ENCODE measurements at regions of chr7 and their contacts with region 1.

Region 1: GRCh38 chr7:37376386-37376785 is 72.3 kb downstream of the ELMO1 start:
- DNase-seq: peak; percentile 75
- ATAC-seq: peak; percentile 82
- H3K4me3 Mint-ChIP-seq: peak overlapping the region; percentile 9
- H3K27ac Mint-ChIP-seq: peak overlapping the region; percentile 82
- H3K4me1 Mint-ChIP-seq: peaks cover 71% of the 10 kb centered on the region
- H3K27me3 Mint-ChIP-seq: no peaks in the 10 kb centered on the region

Region 2: GRCh38 chr7:37365405-37365804 is 11.0 kb before region 1 on chr7:
- CTCF ChIA-PET with region 1: interaction called, 5 read pairs
- POLR2A ChIA-PET with region 1: interaction called, 6 read pairs
- intact Hi-C with region 1: loop called in 1 of 2 experiments (anchors 1 kb)
- DNase-seq: peak; percentile 16
- ATAC-seq: peak; percentile 48
- H3K4me3 Mint-ChIP-seq: no peak overlapping the region
- H3K27ac Mint-ChIP-seq: peak overlapping the region; percentile 99
- H3K4me1 Mint-ChIP-seq: peaks cover 85% of the 10 kb centered on the region
- H3K27me3 Mint-ChIP-seq: no peaks in the 10 kb centered on the region